ENCODE measurements at regions of chr2 and their contacts with region 1.

Region 1: DNA sequence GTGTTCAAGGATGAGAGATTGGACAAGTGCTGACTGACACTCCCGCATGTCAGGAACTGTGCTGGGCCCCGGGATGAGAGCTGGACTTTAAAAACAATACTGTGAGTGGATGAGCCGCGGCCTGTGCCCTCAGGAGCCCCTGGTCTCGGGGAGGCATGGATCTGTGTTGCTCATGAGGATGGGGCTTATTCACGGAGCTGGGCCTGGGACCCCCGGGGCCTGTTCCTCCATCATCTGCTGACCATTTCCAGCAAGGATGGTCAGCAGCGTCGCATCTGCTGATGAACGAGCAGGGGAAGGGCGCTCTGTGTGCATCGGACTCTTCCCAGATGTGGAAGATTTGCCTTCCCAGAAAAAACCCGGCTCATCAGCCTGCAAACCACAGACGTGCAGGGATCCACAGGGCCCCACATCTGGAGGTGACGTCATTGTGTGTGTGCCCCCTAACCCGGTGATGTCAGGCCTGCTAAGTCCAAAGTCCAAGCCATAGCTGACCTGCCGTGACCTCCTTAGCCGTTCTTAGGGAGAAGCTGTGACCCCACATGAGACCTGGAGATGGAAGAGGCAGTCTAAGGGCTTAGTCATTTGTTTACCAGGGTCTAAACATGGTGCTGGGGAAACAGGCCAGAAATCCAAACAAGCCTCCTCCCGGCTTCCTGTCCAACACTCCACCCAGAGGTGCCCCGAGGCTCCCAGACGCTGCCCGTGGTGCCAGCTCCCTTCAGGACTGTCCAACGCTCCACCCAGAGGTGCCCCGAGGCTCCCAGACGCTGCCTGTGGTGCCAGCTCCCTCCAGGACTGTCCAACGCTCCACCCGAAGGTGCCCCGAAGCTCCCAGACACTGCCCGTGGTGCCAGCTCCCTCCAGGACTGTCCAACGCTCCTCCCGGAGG is 143.9 kb downstream of the PXDN start:
- DNase-seq: no peak
- ATAC-seq: peak in 1 of 4 donors; percentile 15
- H3K4me3 ChIP-seq: no peak overlapping the region
- H3K27ac ChIP-seq: peak overlapping the region in 8 of 12 donors; percentile 11 to 70 (median 46)
- H3K4me1 ChIP-seq: peaks cover 0 to 35% (median 15%) of the 10 kb centered on the region in 12 donors
- H3K27me3 ChIP-seq: no peaks in the 10 kb centered on the region
- CTCF ChIP-seq: no peak
- POLR2A ChIP-seq: no peak

Region 2: GRCh38 chr2:1446301-1446700 is 154.1 kb before region 1 on chr2:
- intact Hi-C with region 1: no loop called
- DNase-seq: no peak
- ATAC-seq: no peak
- H3K4me3 ChIP-seq: no peak overlapping the region
- H3K27ac ChIP-seq: no peak overlapping the region
- H3K4me1 ChIP-seq: no peaks in the 10 kb centered on the region
- H3K27me3 ChIP-seq: peaks cover 0 to 19% (median 0%) of the 10 kb centered on the region in 9 donors
- CTCF ChIP-seq: no peak
- POLR2A ChIP-seq: no peak

Region 3: GRCh38 chr2:1653956-1654695 is 53.7 kb after region 1 on chr2:
- intact Hi-C with region 1: loop called in 2 of 10 experiments (anchors 5 kb)
- DNase-seq: peak in 1 of 5 donors; percentile 27
- ATAC-seq: peak in 2 of 4 donors; percentile 20 to 59
- H3K4me3 ChIP-seq: peak overlapping the region in 1 of 12 donors; percentile 12
- H3K27ac ChIP-seq: peak overlapping the region; percentile 28 to 92 (median 68)
- H3K4me1 ChIP-seq: peaks cover 0 to 49% (median 24%) of the 10 kb centered on the region in 12 donors
- H3K27me3 ChIP-seq: no peaks in the 10 kb centered on the region
- CTCF ChIP-seq: no peak
- POLR2A ChIP-seq: no peak